Psoas muscle (tissue), 8 donors: ENCODE measurements at regions of chr18 and their contacts with region 1.

Region 1: DNA sequence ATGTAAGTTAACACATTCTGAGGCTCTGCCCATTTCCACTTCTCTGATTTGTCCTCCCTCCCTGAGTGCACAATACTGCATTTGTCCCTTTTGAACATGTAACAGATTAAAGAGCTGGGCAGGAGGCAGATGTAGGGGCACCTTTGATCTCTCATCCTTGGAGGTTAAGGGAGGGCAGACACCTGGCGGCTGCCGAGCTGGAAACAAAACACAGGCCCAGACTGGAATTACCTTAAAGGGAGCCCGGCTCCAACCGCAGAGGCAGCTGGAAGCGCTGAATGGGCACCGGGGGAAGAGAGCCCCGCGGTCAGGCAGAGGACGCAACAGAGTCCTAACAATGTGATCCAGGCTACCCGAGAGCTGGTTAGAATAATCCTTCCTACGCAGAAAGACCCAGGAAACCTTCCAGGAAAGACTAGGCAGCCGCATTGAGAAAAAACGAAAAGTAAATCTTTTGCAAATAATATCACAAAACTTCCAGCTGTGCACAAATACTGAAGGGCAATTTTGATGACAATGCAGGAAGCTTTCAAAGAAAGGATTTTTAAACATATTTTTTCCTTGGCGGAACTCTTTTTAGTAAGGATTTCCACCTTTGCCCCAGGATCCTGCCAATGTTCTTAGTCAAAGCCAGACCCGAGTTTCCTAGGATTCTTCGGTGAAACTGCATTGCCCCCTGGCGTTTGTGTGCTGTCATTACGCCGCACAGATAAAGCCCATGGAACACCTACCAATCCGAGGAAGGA is 216.0 kb downstream of the TGIF1 start:
- DNase-seq: peak; percentile 73 to 82
- ATAC-seq: peak; percentile 92 to 99 (median 94)
- H3K4me3 ChIP-seq: peak overlapping the region; percentile 49
- H3K27ac ChIP-seq: peak overlapping the region; percentile 72
- H3K4me1 ChIP-seq: peaks cover 5% of the 10 kb centered on the region
- H3K27me3 ChIP-seq: no peaks in the 10 kb centered on the region
- CTCF ChIP-seq: peak; percentile 94

Region 2: GRCh38 chr18:3281456-3282400 is 384.2 kb before region 1 on chr18:
- intact Hi-C with region 1: loop called (anchors 1 to 2 kb)
- DNase-seq: no peak
- ATAC-seq: peak; percentile 69 to 86 (median 74)
- H3K4me3 ChIP-seq: no peak overlapping the region
- H3K27ac ChIP-seq: no peak overlapping the region
- H3K4me1 ChIP-seq: peaks cover 9% of the 10 kb centered on the region
- H3K27me3 ChIP-seq: no peaks in the 10 kb centered on the region
- CTCF ChIP-seq: peak; percentile 75

Region 3: GRCh38 chr18:3454365-3455089 is 211.4 kb before region 1 on chr18:
- intact Hi-C with region 1: loop called in 1 of 2 experiments (anchors 2 kb)
- DNase-seq: no peak
- ATAC-seq: no peak
- H3K4me3 ChIP-seq: peak overlapping the region; percentile 97
- H3K27ac ChIP-seq: peak overlapping the region; percentile 100
- H3K4me1 ChIP-seq: peaks cover 32% of the 10 kb centered on the region
- H3K27me3 ChIP-seq: no peaks in the 10 kb centered on the region
- CTCF ChIP-seq: peak; percentile 68

Region 4: DNA sequence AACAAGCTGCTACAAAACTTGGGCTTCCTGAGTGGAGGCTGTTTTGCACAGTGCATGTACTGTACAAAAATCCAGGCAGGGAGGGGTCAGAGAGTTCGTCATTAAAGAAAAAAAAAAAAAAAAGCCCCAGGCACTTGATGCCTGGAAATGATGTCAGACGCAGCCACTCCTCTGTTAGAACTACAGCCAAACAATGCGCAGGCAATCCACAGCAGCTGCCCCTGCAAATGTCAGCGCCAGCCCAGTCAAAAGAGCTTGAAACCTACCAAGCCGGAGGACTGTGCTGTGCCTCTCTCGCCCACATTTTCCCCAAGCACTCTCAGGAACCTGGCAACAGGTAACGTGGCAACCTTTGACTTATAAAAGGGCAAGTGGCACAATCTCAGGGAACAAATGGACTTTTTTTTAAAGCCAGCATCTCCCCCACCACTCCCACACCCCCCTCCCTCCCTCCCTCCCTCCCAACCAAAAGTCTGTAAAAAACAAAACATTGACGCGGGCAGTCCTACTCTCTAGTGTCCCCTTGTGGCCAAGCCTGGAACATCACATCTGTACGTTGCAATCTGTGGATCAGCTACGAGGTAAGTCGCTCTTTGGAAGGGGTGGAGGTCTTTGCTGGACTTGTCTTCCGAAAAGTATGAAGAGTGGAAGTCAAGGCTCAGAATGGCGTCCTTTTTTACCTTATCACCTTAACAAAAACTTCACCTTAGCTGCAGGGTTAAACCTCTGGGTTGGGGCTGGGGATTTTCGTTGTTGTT is 71.9 kb before region 1 on chr18:
- intact Hi-C with region 1: loop called (anchors 2 to 5 kb)
- DNase-seq: peak; percentile 79 to 84
- ATAC-seq: peak; percentile 73 to 84 (median 75)
- H3K4me3 ChIP-seq: peak overlapping the region; percentile 69
- H3K27ac ChIP-seq: peak overlapping the region; percentile 94
- H3K4me1 ChIP-seq: peaks cover 32% of the 10 kb centered on the region
- H3K27me3 ChIP-seq: no peaks in the 10 kb centered on the region
- CTCF ChIP-seq: peak; percentile 86

Region 5: DNA sequence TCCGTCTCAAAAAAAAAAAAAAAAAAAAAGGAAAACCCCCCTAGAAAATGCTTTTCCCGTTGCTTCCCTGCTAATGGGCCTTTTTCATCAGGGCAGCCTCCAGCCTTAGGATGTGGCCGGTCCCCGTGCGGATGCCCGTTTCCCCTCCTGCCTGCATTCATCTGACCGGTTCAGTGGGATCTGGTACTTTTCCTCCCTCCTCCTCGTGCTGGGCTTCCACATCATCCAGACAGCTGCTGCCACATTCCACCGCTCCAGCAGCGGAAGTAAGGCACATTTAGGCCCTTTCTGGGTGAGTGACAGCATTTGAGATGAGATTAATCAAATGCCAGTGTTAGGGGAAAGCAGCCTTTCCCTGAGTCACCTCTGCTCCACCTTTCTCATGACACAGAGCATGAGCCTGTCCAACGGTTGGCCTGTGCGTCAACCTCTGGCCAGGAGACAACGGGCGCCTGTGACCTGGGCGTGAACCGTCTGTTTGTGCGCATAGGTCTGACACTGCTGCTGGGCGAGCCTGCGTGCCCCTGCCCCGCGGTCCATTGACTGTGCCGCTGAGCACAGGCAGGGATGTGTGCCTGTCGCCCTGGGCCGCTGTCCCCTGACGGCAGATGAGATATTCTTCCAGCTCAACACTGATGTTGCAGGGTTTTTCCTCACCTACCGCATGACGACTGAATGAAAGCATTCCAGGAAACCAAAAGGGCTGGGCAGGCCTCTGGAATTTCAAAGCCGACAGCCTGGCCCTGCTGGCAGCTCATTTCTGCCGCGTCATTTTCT is 42.0 kb before region 1 on chr18:
- intact Hi-C with region 1: loop called in 1 of 2 experiments (anchors 5 kb)
- DNase-seq: peak; percentile 82 to 83
- ATAC-seq: peak; percentile 87 to 91 (median 89)
- H3K4me3 ChIP-seq: peak overlapping the region; percentile 33
- H3K27ac ChIP-seq: peak overlapping the region; percentile 85
- H3K4me1 ChIP-seq: peaks cover 22% of the 10 kb centered on the region
- H3K27me3 ChIP-seq: no peaks in the 10 kb centered on the region
- CTCF ChIP-seq: no peak

Region 6: DNA sequence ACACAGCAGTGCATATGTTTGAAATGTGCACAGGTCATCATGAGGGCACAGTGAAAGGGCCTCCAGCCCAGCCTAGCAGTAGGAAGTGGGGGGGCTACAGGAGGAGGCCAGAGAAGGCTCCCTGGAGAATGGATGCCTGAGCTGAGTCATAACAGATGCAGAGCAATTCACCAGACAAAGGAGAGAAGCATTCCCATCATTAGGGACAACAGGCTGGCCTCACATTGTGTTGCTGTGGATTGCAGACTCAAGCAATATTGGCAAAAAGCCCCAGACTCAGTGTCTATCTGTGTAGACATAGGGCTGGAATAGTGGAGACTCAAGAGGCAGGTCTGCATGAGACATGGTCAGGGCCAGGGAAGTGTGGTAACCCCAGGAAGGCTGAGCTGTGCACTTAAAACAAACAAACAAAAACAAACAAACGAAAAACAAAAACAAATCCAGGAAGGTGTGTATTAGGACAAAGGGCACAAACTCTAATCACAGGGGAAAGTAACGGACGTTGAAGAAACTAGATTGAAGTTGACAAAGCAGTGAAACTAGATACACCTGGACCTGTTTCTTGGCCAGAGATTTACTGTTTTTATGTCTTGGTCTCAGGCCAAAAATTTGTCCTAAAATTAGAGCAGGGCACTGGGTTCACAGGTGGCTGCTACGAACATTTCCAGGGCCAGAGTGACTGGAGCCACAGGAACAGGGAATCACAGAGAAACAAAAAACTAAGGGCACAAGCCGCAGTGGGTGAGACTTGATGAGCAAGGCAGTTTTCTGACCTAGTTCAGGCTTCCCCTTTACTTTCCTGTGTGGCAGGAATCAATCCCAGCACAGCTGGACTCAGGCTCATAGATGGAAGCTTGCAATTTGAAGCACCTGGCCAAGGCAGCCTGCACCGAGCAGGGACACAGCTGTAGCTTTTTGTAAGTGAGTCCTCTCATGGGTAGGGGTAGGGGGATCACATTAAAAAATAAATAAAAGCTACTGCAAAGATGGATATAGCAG is 459.6 kb after region 1 on chr18:
- intact Hi-C with region 1: no loop called
- DNase-seq: peak; percentile 39 to 52
- ATAC-seq: peak; percentile 48 to 79 (median 70)
- H3K4me3 ChIP-seq: no peak overlapping the region
- H3K27ac ChIP-seq: peak overlapping the region; percentile 41
- H3K4me1 ChIP-seq: peaks cover 8% of the 10 kb centered on the region
- H3K27me3 ChIP-seq: no peaks in the 10 kb centered on the region
- CTCF ChIP-seq: no peak